IMR-90 (cell line): ENCODE measurements at regions of chr7 and their contacts with region 1.

Region 1: GRCh38 chr7:120311028-120311788 is 38.2 kb downstream of the KCND2 start:
- DNase-seq: no peak
- ATAC-seq: no peak
- H3K4me3 ChIP-seq: no peak overlapping the region
- H3K27ac ChIP-seq: no peak overlapping the region
- H3K4me1 ChIP-seq: no peaks in the 10 kb centered on the region
- H3K27me3 ChIP-seq: no peaks in the 10 kb centered on the region
- CTCF ChIP-seq: no peak
- POLR2A ChIP-seq: no peak
- RAD21 ChIP-seq: no peak

Region 2: GRCh38 chr7:120241973-120242372 is 69.2 kb before region 1 on chr7:
- CTCF ChIA-PET with region 1: no interaction called
- POLR2A ChIA-PET with region 1: no interaction called
- dilution Hi-C with region 1: no loop called
- in situ Hi-C with region 1: no loop called
- intact Hi-C with region 1: no loop called
- DNase-seq: no peak
- ATAC-seq: no peak
- H3K4me3 ChIP-seq: no peak overlapping the region
- H3K27ac ChIP-seq: no peak overlapping the region
- H3K4me1 ChIP-seq: no peaks in the 10 kb centered on the region
- H3K27me3 ChIP-seq: no peaks in the 10 kb centered on the region
- CTCF ChIP-seq: no peak
- POLR2A ChIP-seq: no peak
- RAD21 ChIP-seq: no peak

Region 3: DNA sequence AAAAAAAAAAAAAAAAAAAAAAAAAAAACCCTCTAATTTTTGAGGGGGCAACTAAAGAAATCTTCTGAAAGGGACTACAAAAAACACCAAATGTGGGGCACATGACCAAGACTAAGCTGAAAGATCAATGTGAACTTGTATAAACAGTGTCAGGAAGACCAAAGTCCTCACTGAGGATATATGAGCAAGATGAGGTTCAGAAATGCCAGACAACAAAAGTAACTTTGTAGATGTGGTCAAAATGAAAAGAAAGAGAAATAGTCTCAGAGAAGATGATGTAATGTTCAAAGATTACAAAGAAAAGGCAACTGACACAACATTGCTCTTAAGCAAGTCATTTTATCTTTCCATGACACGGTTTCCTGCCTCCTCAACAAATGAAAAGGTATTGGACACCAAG is 1513.1 kb after region 1 on chr7:
- CTCF ChIA-PET with region 1: no interaction called
- POLR2A ChIA-PET with region 1: no interaction called
- dilution Hi-C with region 1: no loop called
- in situ Hi-C with region 1: no loop called
- intact Hi-C with region 1: loop called (anchors 5 kb)
- DNase-seq: no peak
- ATAC-seq: no peak
- H3K4me3 ChIP-seq: no peak overlapping the region
- H3K27ac ChIP-seq: no peak overlapping the region
- H3K4me1 ChIP-seq: no peaks in the 10 kb centered on the region
- H3K27me3 ChIP-seq: no peaks in the 10 kb centered on the region
- CTCF ChIP-seq: no peak
- POLR2A ChIP-seq: no peak
- RAD21 ChIP-seq: no peak